Colonic mucosa (tissue), 4 donors: ENCODE measurements at regions of chr5 and their contacts with region 1.

Region 1: GRCh38 chr5:78964887-78965286 is 20.2 kb downstream of the ARSB start:
- DNase-seq: no peak
- H3K4me3 ChIP-seq: no peak overlapping the region
- H3K27ac ChIP-seq: no peak overlapping the region
- H3K4me1 ChIP-seq: peaks cover 3% of the 10 kb centered on the region
- H3K27me3 ChIP-seq: no peaks in the 10 kb centered on the region
- CTCF ChIP-seq: peak; percentile 47

Region 2: GRCh38 chr5:78537821-78538220 is 427.1 kb before region 1 on chr5:
- intact Hi-C with region 1: loop called (anchors 5 kb)
- DNase-seq: no peak
- H3K4me3 ChIP-seq: no peak overlapping the region
- H3K27ac ChIP-seq: no peak overlapping the region
- H3K4me1 ChIP-seq: no peaks in the 10 kb centered on the region
- H3K27me3 ChIP-seq: no peaks in the 10 kb centered on the region
- CTCF ChIP-seq: peak; percentile 35

Region 3: DNA sequence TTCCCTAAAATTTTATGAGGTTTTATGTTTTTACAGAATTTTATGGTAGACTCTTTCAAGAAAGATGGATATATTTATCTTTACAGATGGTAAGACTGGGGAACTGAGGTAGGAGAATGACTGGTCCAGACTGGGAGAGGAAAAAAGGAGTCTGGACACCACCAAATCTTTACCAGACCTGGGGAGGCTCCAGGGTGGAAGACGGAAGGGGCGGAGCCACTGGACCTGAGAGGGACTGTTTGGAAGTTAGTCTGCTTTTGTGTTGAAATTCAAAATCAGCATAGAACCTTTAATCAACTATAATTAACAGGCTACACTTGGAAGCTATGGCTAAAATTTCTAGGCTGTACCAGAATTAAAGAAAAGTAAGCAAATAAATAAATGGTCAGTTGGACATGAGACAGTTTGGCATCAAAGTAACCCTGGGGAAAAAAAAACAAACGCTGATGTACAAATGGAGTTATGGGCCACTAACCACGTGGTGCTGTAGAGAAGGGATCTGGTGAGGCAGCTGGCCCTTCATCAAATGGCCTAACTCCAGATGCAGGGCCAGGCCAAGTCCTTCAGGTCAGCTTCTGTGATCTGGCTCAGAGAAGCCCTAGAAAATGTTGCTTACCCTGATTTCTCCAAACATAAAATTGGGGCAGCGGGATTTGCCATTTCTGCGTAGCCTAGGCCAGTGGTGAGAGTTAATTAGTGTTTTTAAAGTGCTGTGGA is 134.9 kb before region 1 on chr5:
- intact Hi-C with region 1: no loop called
- DNase-seq: peak; percentile 30
- H3K4me3 ChIP-seq: no peak overlapping the region
- H3K27ac ChIP-seq: no peak overlapping the region
- H3K4me1 ChIP-seq: no peaks in the 10 kb centered on the region
- H3K27me3 ChIP-seq: no peaks in the 10 kb centered on the region
- CTCF ChIP-seq: no peak

Region 4: DNA sequence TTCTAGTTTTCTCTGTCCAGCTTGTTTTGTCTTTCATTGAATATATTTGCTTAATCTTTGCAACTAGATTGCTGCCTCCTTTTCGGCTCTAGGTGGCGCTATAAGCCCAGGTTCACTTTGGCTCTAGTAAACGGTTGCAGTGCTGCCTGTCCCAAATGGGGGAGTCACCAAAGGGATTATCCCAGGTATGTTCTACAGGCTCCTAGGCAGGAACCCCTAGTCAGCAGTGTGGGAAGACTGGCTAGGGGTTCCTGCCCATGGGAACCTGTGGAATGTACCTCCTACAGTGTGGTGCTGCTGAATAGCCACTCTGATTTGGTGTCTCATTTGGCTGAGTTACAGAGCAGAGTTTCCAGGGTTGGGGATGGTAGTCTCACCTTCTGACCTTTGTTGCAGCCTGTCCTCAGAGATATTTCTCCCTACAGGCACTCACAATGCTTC is 64.9 kb before region 1 on chr5:
- intact Hi-C with region 1: loop called (anchors 5 kb)
- DNase-seq: peak; percentile 52
- H3K4me3 ChIP-seq: no peak overlapping the region
- H3K27ac ChIP-seq: no peak overlapping the region
- H3K4me1 ChIP-seq: no peaks in the 10 kb centered on the region
- H3K27me3 ChIP-seq: no peaks in the 10 kb centered on the region
- CTCF ChIP-seq: peak; percentile 68

Region 5: GRCh38 chr5:79025054-79025472 is 60.2 kb after region 1 on chr5:
- intact Hi-C with region 1: no loop called
- DNase-seq: peak; percentile 61
- H3K4me3 ChIP-seq: peak overlapping the region; percentile 9
- H3K27ac ChIP-seq: no peak overlapping the region
- H3K4me1 ChIP-seq: no peaks in the 10 kb centered on the region
- H3K27me3 ChIP-seq: no peaks in the 10 kb centered on the region
- CTCF ChIP-seq: peak; percentile 97

Region 6: DNA sequence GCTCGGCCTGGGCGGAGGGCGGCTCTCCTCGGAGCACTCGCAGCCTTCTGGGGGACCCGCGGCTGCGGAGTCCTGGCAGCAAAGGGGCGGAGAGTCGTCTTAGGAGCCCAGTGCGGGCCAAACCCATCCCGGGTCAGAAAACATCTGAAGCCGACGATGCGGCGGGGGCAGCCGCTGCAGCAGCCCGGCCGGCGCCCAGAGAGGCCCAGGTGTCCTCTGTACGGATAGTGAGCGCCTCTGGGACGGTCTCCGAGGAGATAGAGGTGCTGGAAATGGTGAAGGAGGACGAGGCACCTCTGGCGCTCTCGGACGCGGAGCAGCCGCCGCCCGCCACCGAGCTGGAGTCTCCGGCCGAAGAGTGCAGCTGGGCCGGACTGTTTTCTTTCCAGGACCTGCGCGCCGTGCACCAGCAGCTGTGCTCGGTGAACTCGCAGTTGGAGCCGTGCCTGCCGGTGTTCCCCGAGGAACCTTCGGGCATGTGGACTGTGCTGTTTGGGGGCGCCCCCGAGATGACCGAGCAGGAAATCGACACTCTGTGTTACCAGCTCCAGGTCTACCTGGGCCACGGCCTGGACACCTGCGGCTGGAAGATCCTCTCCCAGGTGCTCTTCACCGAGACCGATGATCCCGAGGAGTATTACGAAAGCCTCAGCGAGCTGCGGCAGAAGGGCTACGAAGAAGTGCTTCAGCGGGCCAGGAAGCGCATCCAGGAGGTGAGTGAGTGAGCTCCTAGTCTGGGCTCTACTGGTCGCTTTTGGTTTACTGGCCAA is 272.3 kb after region 1 on chr5:
- intact Hi-C with region 1: no loop called
- DNase-seq: peak; percentile 60
- H3K4me3 ChIP-seq: peak overlapping the region; percentile 73
- H3K27ac ChIP-seq: peak overlapping the region; percentile 87
- H3K4me1 ChIP-seq: peaks cover 3% of the 10 kb centered on the region
- H3K27me3 ChIP-seq: no peaks in the 10 kb centered on the region
- CTCF ChIP-seq: no peak